ENCODE measurements at regions of chr11 and their contacts with region 1.

Region 1: DNA sequence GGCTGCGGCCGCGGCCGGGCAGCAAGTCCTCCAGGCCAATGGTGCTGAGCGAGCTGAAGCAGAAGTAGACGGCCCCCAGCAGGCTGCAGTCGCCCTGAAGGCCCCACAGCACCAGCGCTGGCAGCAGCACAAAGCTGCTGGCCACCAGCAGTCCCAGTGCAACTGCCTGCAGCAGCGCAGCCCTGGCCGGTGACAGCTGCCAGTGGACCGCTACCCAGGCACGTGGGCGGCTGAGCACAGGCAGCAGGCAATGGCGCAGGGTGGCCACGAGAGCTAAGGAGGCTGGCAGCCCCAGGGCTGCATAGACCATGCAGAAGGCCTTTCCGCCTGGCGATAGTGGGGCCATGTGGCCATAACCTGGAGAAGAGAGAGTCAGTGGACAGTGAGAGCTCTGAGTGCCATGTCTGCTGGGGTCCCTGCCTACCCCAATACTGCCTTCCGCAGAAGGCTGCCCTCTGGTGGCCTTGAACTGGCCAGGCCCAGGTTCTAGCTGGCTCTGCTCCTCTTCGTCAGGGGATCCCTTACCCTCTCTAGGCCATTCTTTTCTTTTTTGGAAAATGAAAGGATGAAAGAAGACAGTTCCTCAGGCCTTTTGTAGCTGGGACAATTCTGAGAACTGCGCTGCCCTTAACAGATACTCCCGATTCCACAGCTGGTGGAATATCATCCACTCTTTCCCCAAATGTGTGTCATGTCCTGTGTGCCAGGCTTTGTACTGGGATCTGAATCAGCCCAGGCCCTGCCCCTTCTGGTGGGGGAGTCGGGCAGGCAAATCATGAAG is 1.9 kb downstream of the KCNK7 start:
- DNase-seq: peak; percentile 72
- ATAC-seq: peak; percentile 48

Region 2: DNA sequence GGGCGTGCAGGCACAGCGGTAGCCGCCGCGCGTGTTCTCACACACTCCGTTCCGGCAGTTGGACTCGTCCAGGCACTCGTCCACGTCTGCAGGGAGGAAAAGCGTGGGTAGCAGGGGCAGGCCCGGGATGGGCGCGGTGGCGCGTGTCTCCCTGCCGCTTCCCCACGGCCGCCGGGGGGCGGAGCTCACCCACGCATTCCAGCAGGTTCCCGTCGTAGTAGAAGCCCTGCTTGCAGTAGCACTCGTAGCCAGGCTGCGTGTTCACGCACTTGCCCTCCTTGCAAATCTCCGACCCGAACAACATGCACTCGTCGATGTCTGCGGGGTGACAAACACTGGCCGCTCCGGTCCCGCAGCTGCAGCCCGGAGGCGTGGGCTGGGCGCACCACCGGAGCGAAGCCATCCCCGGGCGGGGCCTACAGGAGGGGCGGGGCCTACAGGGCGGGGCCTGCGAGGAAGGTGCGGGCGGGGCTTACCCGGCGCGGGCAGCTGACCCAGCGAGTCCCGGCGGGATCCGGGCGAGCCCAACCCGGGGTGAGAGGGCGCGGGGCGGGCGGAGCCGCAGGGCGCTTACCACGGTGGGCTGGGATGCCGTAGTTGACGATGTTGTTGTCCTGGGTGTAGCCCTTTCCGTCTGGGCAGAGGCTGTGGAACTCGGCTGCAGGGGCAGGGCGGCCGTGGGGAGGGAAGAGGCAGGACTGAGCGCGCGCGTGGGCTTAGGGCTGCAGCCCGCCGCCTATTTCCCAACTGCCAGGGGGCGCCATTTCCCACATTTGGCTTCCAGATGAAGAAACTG is 53.2 kb before region 1 on chr11:
- intact Hi-C with region 1: loop called (anchors 10 kb)
- DNase-seq: peak; percentile 96
- ATAC-seq: peak; percentile 94

Measured in left ventricle myocardium superior (tissue), 1 donor.